ENCODE measurements at regions of chr3 and their contacts with region 1.

Region 1: GRCh38 chr3:4633078-4634004 is 140.2 kb downstream of the ITPR1 start:
- DNase-seq: peak in 1 of 2 donors; percentile 24
- ATAC-seq: peak in 6 of 8 donors; percentile 42 to 88 (median 76)
- H3K4me3 ChIP-seq: no peak overlapping the region
- H3K27ac ChIP-seq: peak overlapping the region in 1 of 10 donors; percentile 1
- H3K4me1 ChIP-seq: peaks cover 0 to 8% (median 0%) of the 10 kb centered on the region in 9 donors
- H3K27me3 ChIP-seq: no peaks in the 10 kb centered on the region
- CTCF ChIP-seq: peak; percentile 81 to 93 (median 88)

Region 2: GRCh38 chr3:4350789-4351163 is 282.6 kb before region 1 on chr3:
- intact Hi-C with region 1: loop called (anchors 1 to 5 kb)
- DNase-seq: peak in 1 of 2 donors; percentile 66
- ATAC-seq: peak; percentile 71 to 92 (median 86)
- H3K4me3 ChIP-seq: peak overlapping the region in 9 of 10 donors; percentile 1 to 47 (median 43)
- H3K27ac ChIP-seq: peak overlapping the region in 8 of 10 donors; percentile 19 to 73 (median 54)
- H3K4me1 ChIP-seq: peaks cover 0 to 22% (median 9%) of the 10 kb centered on the region in 9 donors
- H3K27me3 ChIP-seq: no peaks in the 10 kb centered on the region
- CTCF ChIP-seq: peak; percentile 70 to 87 (median 77)

Region 3: DNA sequence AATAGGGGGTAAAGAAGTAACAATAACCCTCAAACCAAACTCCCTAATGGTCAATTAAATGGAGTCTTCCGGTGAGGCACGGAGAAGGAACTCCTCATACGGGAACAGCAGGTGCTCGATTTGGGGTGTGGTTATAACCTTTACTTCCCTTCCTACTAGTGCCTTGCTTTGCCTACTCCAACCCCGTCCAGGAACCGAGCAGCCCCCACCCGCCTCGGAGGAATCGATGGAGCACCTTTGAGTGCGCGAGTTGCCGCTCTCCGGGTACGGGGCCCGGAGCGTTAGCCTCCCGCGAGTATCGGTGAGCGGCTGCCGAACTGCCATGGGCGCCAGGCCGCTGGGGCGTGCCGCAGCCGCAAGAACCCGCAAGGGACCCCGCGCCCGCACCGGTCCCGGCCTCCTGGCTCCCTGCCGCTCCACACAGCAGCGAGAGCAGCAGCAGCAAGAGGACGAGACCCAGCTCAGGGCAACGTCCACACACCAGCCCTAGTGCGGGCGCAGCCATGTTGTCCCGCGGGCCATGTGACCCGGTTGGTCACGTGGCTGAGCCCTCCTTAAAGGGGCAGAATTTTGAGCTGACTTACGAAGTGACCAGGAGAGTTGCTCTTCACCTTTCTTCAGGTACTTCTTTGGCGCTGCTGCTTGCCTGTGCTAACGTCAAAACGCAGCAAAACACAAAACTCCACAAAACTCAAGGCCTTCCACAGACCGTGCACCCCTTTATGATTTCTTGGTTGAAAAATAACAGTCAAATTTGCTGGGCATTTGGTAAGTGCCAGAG is 166.4 kb before region 1 on chr3 and contains the start of gene SUMF1:
- intact Hi-C with region 1: loop called in 2 of 10 experiments (anchors 10 kb)
- DNase-seq: peak; percentile 77 to 79
- ATAC-seq: peak; percentile 98 to 99 (median 98)
- H3K4me3 ChIP-seq: peak within 1 kb of the TSS; percentile 76 to 100 (median 93)
- H3K27ac ChIP-seq: peak within 1 kb of the TSS; percentile 11 to 97 (median 80)
- H3K4me1 ChIP-seq: peaks cover 0 to 23% (median 15%) of the 10 kb centered on the region in 9 donors
- H3K27me3 ChIP-seq: no peaks in the 10 kb centered on the region
- CTCF ChIP-seq: peak in 1 of 9 donors; percentile 4
- total RNA-seq, gene SUMF1: 6.9 to 15.1 (median 8.9) TPM

Region 4: GRCh38 chr3:4852780-4853748 is 219.7 kb after region 1 on chr3:
- intact Hi-C with region 1: no loop called
- DNase-seq: no peak
- ATAC-seq: no peak
- H3K4me3 ChIP-seq: no peak overlapping the region
- H3K27ac ChIP-seq: peak overlapping the region in 2 of 10 donors; percentile 6 to 39
- H3K4me1 ChIP-seq: peaks cover 0 to 55% (median 7%) of the 10 kb centered on the region in 9 donors
- H3K27me3 ChIP-seq: no peaks in the 10 kb centered on the region
- CTCF ChIP-seq: no peak

Measured in heart right ventricle (tissue), 16 donors.